ENCODE measurements at regions of chr18 and their contacts with region 1.

Region 1: GRCh38 chr18:25621144-25621543 is 269.2 kb upstream of the ZNF521 start:
- DNase-seq: no peak
- ATAC-seq: no peak

Region 2: GRCh38 chr18:25594351-25594750 is 26.8 kb before region 1 on chr18:
- intact Hi-C with region 1: loop called in 1 of 2 experiments (anchors 5 kb)
- DNase-seq: no peak
- ATAC-seq: no peak